ENCODE measurements at regions of chr18 and their contacts with region 1.

Region 1: GRCh38 chr18:70454704-70455322 is 166.0 kb downstream of the SOCS6 start:
- DNase-seq: no peak
- H3K4me3 ChIP-seq: no peak overlapping the region
- H3K27ac ChIP-seq: no peak overlapping the region
- H3K4me1 ChIP-seq: no peaks in the 10 kb centered on the region
- H3K27me3 ChIP-seq: no peaks in the 10 kb centered on the region
- CTCF ChIP-seq: peak in 2 of 3 donors; percentile 19 to 31
- EP300 ChIP-seq: no peak
- POLR2A ChIP-seq: no peak

Region 2: GRCh38 chr18:69998523-69998987 is 456.3 kb before region 1 on chr18:
- intact Hi-C with region 1: no loop called
- DNase-seq: no peak
- H3K4me3 ChIP-seq: no peak overlapping the region
- H3K27ac ChIP-seq: no peak overlapping the region
- H3K4me1 ChIP-seq: no peaks in the 10 kb centered on the region
- H3K27me3 ChIP-seq: no peaks in the 10 kb centered on the region
- CTCF ChIP-seq: no peak
- EP300 ChIP-seq: no peak
- POLR2A ChIP-seq: no peak

Region 3: DNA sequence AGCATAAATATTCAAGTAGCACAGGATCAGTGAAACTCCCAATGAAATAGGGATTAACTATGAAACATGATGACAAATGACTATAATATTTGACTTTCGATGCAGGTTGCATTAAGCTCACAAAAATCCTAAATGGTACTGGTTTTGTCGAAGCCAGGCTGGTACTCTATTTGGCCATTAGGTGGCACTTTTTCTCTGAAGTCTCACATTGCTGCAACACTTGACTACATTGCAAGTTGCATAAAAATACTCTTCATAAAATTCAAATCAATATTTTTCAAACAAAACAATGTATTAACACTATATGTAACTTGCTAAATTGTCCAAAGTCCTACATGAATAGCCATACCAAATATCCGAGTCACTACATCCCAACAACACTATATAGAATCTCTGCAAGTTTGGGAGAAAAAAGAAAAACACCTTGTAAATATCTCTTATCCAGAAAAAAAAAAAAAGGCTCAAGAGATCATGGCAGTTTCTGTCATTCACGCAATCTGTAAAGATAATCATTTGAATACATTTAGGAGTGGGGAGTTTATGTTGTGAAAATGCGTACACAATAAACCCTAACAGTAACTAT is 258.9 kb before region 1 on chr18:
- intact Hi-C with region 1: loop called in 2 of 4 experiments (anchors 10 kb)
- DNase-seq: no peak
- H3K4me3 ChIP-seq: no peak overlapping the region
- H3K27ac ChIP-seq: no peak overlapping the region
- H3K4me1 ChIP-seq: no peaks in the 10 kb centered on the region
- H3K27me3 ChIP-seq: no peaks in the 10 kb centered on the region
- CTCF ChIP-seq: peak; percentile 10 to 16 (median 13)
- EP300 ChIP-seq: no peak
- POLR2A ChIP-seq: no peak

Region 4: GRCh38 chr18:70523035-70523791 is 68.4 kb after region 1 on chr18:
- intact Hi-C with region 1: no loop called
- DNase-seq: no peak
- H3K4me3 ChIP-seq: no peak overlapping the region
- H3K27ac ChIP-seq: no peak overlapping the region
- H3K4me1 ChIP-seq: no peaks in the 10 kb centered on the region
- H3K27me3 ChIP-seq: no peaks in the 10 kb centered on the region
- CTCF ChIP-seq: no peak
- EP300 ChIP-seq: no peak
- POLR2A ChIP-seq: no peak